Activated T-helper 1 cell treated with anti-CD3 and anti-CD28 coated beads, Interleukin-12 subunit alpha, Interleukin-12 subunit beta, Interleukin-2, Interleukin-4 antibody, amounts not matched to agents 30 ng/mL and 10 ng/mL and 1 ng/mL, durations not matched to agents 14 hours and 24 hours and 36 hours (primary cell): ENCODE measurements at regions of chr4 and their contacts with region 1.

Region 1: DNA sequence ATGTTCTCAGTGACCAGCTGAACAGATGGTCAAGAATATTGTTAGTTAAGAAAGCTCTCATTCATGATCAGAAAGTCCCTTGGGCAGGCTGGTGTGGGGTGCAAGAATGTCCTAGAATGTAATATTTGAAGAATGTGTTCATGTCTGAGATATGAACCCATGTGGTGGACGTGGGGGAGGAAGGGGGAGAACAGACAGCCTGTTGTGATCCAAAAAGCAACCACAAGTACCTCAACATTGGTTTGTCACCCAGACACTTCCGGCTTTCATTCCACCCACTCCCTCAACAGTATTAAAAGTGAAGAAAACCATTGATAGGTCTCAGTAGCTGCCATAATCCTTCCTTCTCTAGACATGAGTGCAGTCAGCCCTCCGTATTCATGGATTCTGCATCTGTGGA is 82.2 kb downstream of the MAML3 start:
- DNase-seq: peak; percentile 62
- H3K4me3 Mint-ChIP-seq: peak overlapping the region; percentile 71
- H3K27ac Mint-ChIP-seq: peak overlapping the region; percentile 70
- H3K4me1 Mint-ChIP-seq: peaks cover 59% of the 10 kb centered on the region
- H3K27me3 Mint-ChIP-seq: peaks cover 48% of the 10 kb centered on the region

Region 2: GRCh38 chr4:139253713-139254112 is 818.1 kb before region 1 on chr4:
- intact Hi-C with region 1: no loop called
- DNase-seq: no peak
- H3K4me3 Mint-ChIP-seq: no peak overlapping the region
- H3K27ac Mint-ChIP-seq: no peak overlapping the region
- H3K4me1 Mint-ChIP-seq: no peaks in the 10 kb centered on the region
- H3K27me3 Mint-ChIP-seq: peaks cover 11% of the 10 kb centered on the region

Region 3: DNA sequence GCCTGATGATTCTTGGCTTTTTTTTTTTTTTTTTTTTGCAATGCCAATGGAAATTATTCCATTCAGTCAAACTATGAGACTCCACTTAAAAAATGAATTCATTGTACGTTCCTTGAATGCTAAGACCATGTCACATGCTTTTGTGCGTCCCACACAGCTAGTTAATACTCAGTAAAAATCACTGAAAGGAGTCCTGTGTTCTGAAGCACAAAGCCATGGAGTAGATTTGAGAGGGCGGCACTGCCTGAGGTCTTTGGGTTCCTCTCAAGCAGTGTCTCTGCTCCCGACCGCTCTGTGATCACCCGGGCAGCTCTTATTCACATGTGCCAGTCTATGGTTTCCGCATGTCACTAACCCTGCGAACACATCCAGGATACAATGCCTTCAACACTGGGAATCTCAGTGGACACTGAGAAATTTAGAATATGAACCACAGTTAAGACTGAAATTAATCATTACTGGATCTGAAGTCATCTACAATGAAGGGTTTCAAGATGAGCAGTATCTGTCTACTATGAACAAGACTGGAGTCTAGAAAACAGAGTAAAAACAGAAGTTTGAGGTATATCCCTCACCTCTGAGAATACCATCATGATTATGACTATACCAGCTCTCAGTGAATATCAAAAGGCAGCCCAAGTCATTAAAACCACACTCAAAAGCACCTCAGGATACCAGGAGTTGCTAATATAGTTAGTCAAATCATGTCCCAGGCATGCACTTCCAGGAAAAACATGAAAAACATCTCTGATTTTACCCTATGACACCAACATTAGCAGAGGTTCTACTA is 213.2 kb before region 1 on chr4:
- intact Hi-C with region 1: loop called (anchors 2 kb)
- DNase-seq: no peak
- H3K4me3 Mint-ChIP-seq: no peak overlapping the region
- H3K27ac Mint-ChIP-seq: no peak overlapping the region
- H3K4me1 Mint-ChIP-seq: peaks cover 33% of the 10 kb centered on the region
- H3K27me3 Mint-ChIP-seq: peaks cover 18% of the 10 kb centered on the region

Region 4: GRCh38 chr4:140028676-140029517 is 42.9 kb before region 1 on chr4:
- intact Hi-C with region 1: no loop called
- DNase-seq: no peak
- H3K4me3 Mint-ChIP-seq: no peak overlapping the region
- H3K27ac Mint-ChIP-seq: no peak overlapping the region
- H3K4me1 Mint-ChIP-seq: no peaks in the 10 kb centered on the region
- H3K27me3 Mint-ChIP-seq: peaks cover 36% of the 10 kb centered on the region

Region 5: GRCh38 chr4:140049024-140049848 is 22.6 kb before region 1 on chr4:
- intact Hi-C with region 1: loop called (anchors 1 kb)
- DNase-seq: peak; percentile 11
- H3K4me3 Mint-ChIP-seq: peak overlapping the region; percentile 77
- H3K27ac Mint-ChIP-seq: no peak overlapping the region
- H3K4me1 Mint-ChIP-seq: peaks cover 32% of the 10 kb centered on the region
- H3K27me3 Mint-ChIP-seq: peaks cover 59% of the 10 kb centered on the region